Pancreas (tissue), 10 donors: ENCODE measurements at regions of chr16 and their contacts with region 1.

Region 1: DNA sequence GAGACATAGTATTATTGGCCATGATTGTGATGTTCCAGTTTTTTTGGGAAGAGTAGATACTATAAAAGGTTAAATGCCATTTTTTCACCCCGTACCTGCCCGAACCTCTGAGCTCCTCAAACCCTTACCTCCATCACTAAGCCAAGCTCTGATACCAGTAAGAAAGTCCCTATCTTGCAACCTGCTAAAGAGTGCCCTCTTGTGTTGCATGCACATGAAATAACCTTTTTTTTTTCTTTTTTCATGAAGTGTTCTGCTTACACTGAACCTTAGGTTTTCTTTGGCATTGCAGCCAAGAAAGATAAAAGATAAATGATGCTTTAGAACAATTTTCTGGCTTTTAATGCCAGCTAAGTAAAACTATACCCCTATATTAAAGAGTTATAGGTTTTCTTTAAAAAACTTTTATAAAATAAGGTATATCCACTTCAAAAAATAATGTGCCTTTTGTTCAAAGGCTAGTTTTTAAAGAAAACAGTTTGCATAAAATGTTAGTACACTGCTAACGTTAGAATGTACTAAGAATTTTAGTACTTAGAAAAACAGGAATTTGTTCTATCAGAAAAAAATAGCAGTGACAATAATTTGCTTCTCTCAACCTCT is 295.3 kb upstream of the PMFBP1 start:
- DNase-seq: no peak
- ATAC-seq: peak in 3 of 4 donors; percentile 77 to 78 (median 78)
- H3K4me3 ChIP-seq: no peak overlapping the region
- H3K27ac ChIP-seq: no peak overlapping the region
- H3K4me1 ChIP-seq: no peaks in the 10 kb centered on the region
- H3K27me3 ChIP-seq: no peaks in the 10 kb centered on the region
- CTCF ChIP-seq: peak in 2 of 4 donors; percentile 22 to 35

Region 2: DNA sequence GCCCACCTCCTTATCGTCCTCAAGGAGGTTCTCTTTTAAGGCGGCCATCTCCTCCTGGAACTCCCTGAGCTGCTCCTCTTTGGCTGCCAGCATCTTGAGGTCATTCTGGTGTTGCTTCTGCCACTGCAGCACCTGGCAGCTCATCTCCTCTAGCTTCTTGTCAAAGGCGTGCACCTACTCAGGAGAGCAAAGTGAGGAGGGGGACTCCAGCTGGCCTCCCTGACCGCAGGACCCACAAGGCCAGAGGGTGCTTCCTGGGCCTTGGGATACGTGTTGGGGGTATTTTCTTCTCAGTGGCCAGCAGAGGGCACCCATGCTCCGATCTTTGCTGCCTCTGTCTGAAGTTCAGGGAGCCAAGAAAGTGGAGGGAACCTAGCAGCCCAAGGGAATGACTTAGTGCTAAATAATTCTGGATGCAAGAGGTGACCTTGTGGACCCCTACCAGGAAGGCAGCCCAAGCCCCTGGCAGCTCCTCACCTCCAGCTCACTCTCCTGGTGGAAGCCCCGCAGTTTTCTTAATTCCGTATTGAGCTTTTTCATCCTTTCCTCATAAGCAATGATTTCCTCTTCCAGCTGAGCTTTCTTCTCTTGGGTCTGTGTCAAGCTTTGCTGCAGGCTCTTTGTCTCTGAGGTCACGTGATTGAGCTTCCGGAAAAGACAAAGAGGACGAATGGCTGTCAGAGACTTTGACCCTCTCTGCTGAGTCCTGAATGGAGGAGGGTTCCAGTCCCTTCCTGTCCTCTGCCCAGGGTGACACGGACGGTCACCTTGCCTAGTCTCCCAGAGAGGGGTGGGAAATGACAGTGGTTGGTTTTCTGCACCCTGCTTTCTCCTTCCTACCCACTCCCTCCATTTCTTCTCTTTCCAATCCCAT is 342.3 kb before region 1 on chr16:
- intact Hi-C with region 1: loop called in 2 of 3 experiments (anchors 5 to 10 kb)
- DNase-seq: peak; percentile 57 to 87 (median 72)
- ATAC-seq: peak; percentile 86 to 94 (median 94)
- H3K4me3 ChIP-seq: no peak overlapping the region
- H3K27ac ChIP-seq: peak overlapping the region in 2 of 4 donors; percentile 55 to 57
- H3K4me1 ChIP-seq: peaks cover 0 to 7% (median 0%) of the 10 kb centered on the region in 3 donors
- H3K27me3 ChIP-seq: no peaks in the 10 kb centered on the region
- CTCF ChIP-seq: peak; percentile 55 to 73 (median 58)

Region 3: GRCh38 chr16:72182976-72183375 is 284.3 kb before region 1 on chr16:
- intact Hi-C with region 1: no loop called
- DNase-seq: no peak
- ATAC-seq: no peak
- H3K4me3 ChIP-seq: no peak overlapping the region
- H3K27ac ChIP-seq: no peak overlapping the region
- H3K4me1 ChIP-seq: no peaks in the 10 kb centered on the region
- H3K27me3 ChIP-seq: no peaks in the 10 kb centered on the region
- CTCF ChIP-seq: no peak

Region 4: GRCh38 chr16:72241930-72242329 is 225.3 kb before region 1 on chr16:
- intact Hi-C with region 1: loop called in 1 of 3 experiments (anchors 10 kb)
- DNase-seq: peak in 1 of 6 donors; percentile 24
- ATAC-seq: peak; percentile 84 to 98 (median 97)
- H3K4me3 ChIP-seq: no peak overlapping the region
- H3K27ac ChIP-seq: no peak overlapping the region
- H3K4me1 ChIP-seq: peaks cover 0 to under 1% (median 0%) of the 10 kb centered on the region in 3 donors
- H3K27me3 ChIP-seq: no peaks in the 10 kb centered on the region
- CTCF ChIP-seq: peak; percentile 22 to 67 (median 58)

Region 5: DNA sequence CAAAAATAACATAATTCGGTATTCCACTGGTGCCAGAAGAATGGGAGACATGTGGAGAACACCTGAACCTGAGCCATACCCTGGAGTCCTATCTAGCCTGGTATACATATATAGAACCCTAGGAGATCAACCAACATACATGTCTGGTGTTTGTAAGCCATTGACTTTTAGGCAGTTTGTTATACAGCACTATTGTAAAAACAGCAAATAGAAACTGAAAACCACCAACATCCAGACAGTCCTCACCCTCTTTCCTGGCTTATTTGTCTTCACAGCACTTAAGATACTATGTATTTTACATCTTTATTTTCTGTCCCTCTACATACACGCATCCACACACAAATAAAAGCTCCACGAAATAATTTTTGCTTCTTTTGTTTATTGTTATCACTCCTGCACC is 108.9 kb after region 1 on chr16:
- intact Hi-C with region 1: no loop called
- DNase-seq: no peak
- ATAC-seq: no peak
- H3K4me3 ChIP-seq: no peak overlapping the region
- H3K27ac ChIP-seq: no peak overlapping the region
- H3K4me1 ChIP-seq: no peaks in the 10 kb centered on the region
- H3K27me3 ChIP-seq: no peaks in the 10 kb centered on the region
- CTCF ChIP-seq: no peak